ENCODE measurements at regions of chr15 and their contacts with region 1.

Region 1: GRCh38 chr15:29736744-29737020 is 85.6 kb downstream of the TJP1 start:
- DNase-seq: peak; percentile 59 to 79
- H3K4me3 ChIP-seq: no peak overlapping the region
- H3K27ac ChIP-seq: peak overlapping the region; percentile 5
- H3K4me1 ChIP-seq: peaks cover 29% of the 10 kb centered on the region
- H3K27me3 ChIP-seq: no peaks in the 10 kb centered on the region
- CTCF ChIP-seq: no peak

Region 2: GRCh38 chr15:29674661-29675533 is 61.8 kb before region 1 on chr15:
- CTCF ChIA-PET with region 1: no interaction called
- POLR2A ChIA-PET with region 1: no interaction called
- intact Hi-C with region 1: loop called (anchors 1 kb)
- DNase-seq: peak in 1 of 2 experiments; percentile 82
- H3K4me3 ChIP-seq: no peak overlapping the region; the same call in 1 of the 2 replicates
- H3K27ac ChIP-seq: no peak overlapping the region
- H3K4me1 ChIP-seq: 0 out of 2 replicates have a peak, but pooled peaks cover 5% of the 10 kb centered on the region
- H3K27me3 ChIP-seq: no peaks in the 10 kb centered on the region
- CTCF ChIP-seq: no peak

Region 3: GRCh38 chr15:29821416-29822131 is 84.9 kb after region 1 on chr15:
- CTCF ChIA-PET with region 1: no interaction called
- POLR2A ChIA-PET with region 1: no interaction called
- intact Hi-C with region 1: loop called (anchors 1 kb)
- DNase-seq: peak; percentile 83 to 85
- H3K4me3 ChIP-seq: peak overlapping the region; percentile 74
- H3K27ac ChIP-seq: peak overlapping the region; percentile 95
- H3K4me1 ChIP-seq: peaks cover 26% of the 10 kb centered on the region
- H3K27me3 ChIP-seq: no peaks in the 10 kb centered on the region
- CTCF ChIP-seq: 0 out of 2 replicates have a peak, but pooled peaks have one; percentile 11

Region 4: GRCh38 chr15:29935276-29936020 is 198.8 kb after region 1 on chr15:
- CTCF ChIA-PET with region 1: no interaction called
- POLR2A ChIA-PET with region 1: no interaction called
- intact Hi-C with region 1: loop called (anchors 1 kb)
- DNase-seq: peak in 1 of 2 experiments; percentile 55
- H3K4me3 ChIP-seq: no peak overlapping the region
- H3K27ac ChIP-seq: peak overlapping the region; percentile 81
- H3K4me1 ChIP-seq: peaks cover 68% of the 10 kb centered on the region
- H3K27me3 ChIP-seq: no peaks in the 10 kb centered on the region
- CTCF ChIP-seq: peak; percentile 41; the same call in 1 of the 2 replicates

Region 5: GRCh38 chr15:30043211-30043655 is 306.6 kb after region 1 on chr15:
- CTCF ChIA-PET with region 1: interaction called, 22 read pairs
- POLR2A ChIA-PET with region 1: no interaction called
- intact Hi-C with region 1: no loop called
- DNase-seq: no peak
- H3K4me3 ChIP-seq: no peak overlapping the region
- H3K27ac ChIP-seq: no peak overlapping the region
- H3K4me1 ChIP-seq: no peaks in the 10 kb centered on the region
- H3K27me3 ChIP-seq: no peaks in the 10 kb centered on the region; the same call in 1 of the 2 replicates
- CTCF ChIP-seq: peak; percentile 42; the same call in 1 of the 2 replicates